PC-3 (cell line): ENCODE measurements at regions of chr14 and their contacts with region 1.

Region 1: GRCh38 chr14:63543000-63543825 is at the start of gene PPP2R5E:
- DNase-seq: peak; percentile 99
- ATAC-seq: peak; percentile 94
- H3K4me3 ChIP-seq: peak within 1 kb of the TSS; percentile 90
- H3K27ac ChIP-seq: peak within 1 kb of the TSS; percentile 61
- H3K4me1 ChIP-seq: peaks cover 19% of the 10 kb centered on the region
- H3K27me3 ChIP-seq: no peaks in the 10 kb centered on the region
- CTCF ChIP-seq: no peak
- total RNA-seq, gene PPP2R5E: 17.2 and 26.4 TPM in 2 replicates

Region 2: DNA sequence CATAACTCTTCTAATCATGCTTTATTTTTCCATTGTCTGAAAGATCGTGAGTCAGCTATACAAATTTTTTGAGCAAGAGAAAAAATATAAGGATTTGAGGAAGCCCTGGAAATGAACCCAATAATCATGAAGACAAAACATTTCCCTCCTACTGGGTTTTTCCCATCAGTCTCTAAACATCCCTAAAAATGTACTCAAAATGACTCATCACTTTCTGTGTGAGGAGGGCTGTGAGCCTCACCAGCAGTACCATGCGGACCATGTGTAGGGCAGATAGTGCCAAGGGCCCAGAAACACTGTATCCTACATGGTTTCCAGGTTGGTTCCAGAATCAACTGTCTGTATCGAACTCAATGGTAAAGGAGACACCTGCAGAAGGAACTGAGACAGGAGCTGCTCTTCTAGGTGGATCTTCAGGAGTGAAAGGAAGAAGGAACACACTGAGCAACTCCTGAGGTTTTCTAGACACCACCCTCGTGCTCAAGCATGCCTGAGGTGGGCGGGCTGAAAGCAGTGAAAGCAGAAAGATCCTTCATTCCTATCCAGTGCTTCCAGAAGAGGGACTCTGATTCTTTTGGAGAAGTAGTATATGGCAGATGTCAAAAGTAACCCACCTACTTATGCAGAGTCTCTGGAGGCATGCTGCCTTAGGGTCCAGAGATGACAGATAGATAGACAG is 387.6 kb before region 1 on chr14:
- CTCF ChIA-PET with region 1: no interaction called
- POLR2A ChIA-PET with region 1: no interaction called
- intact Hi-C with region 1: no loop called
- DNase-seq: no peak
- ATAC-seq: no peak
- H3K4me3 ChIP-seq: no peak overlapping the region
- H3K27ac ChIP-seq: no peak overlapping the region
- H3K4me1 ChIP-seq: no peaks in the 10 kb centered on the region
- H3K27me3 ChIP-seq: 0 out of 2 replicates have a peak, but pooled peaks cover 5% of the 10 kb centered on the region
- CTCF ChIP-seq: no peak

Region 3: GRCh38 chr14:63388763-63389431 is 154.3 kb before region 1 on chr14:
- CTCF ChIA-PET with region 1: interaction called, 21 read pairs
- POLR2A ChIA-PET with region 1: interaction called, 3 read pairs
- intact Hi-C with region 1: loop called (anchors 1 kb)
- DNase-seq: peak; percentile 78
- ATAC-seq: peak; percentile 96
- H3K4me3 ChIP-seq: no peak overlapping the region
- H3K27ac ChIP-seq: no peak overlapping the region
- H3K4me1 ChIP-seq: no peaks in the 10 kb centered on the region
- H3K27me3 ChIP-seq: no peaks in the 10 kb centered on the region
- CTCF ChIP-seq: peak; percentile 98

Region 4: GRCh38 chr14:63437953-63438757 is 105.1 kb before region 1 on chr14:
- CTCF ChIA-PET with region 1: interaction called, 7 read pairs
- POLR2A ChIA-PET with region 1: no interaction called
- intact Hi-C with region 1: loop called (anchors 1 kb)
- DNase-seq: peak; percentile 98
- ATAC-seq: peak; percentile 96
- H3K4me3 ChIP-seq: peak overlapping the region; percentile 56
- H3K27ac ChIP-seq: peak overlapping the region; percentile 80
- H3K4me1 ChIP-seq: peaks cover 40% of the 10 kb centered on the region
- H3K27me3 ChIP-seq: no peaks in the 10 kb centered on the region
- CTCF ChIP-seq: peak; percentile 56

Region 5: GRCh38 chr14:63470962-63471793 is 72.0 kb before region 1 on chr14:
- CTCF ChIA-PET with region 1: no interaction called
- POLR2A ChIA-PET with region 1: interaction called, 3 read pairs
- intact Hi-C with region 1: loop called (anchors 5 kb)
- DNase-seq: peak; percentile 96
- ATAC-seq: peak; percentile 87
- H3K4me3 ChIP-seq: peak overlapping the region; percentile 25; the same call in 1 of the 2 replicates
- H3K27ac ChIP-seq: peak overlapping the region; percentile 89
- H3K4me1 ChIP-seq: peaks cover 55% of the 10 kb centered on the region
- H3K27me3 ChIP-seq: no peaks in the 10 kb centered on the region
- CTCF ChIP-seq: no peak

Region 6: GRCh38 chr14:63632932-63633514 is 89.8 kb after region 1 on chr14:
- CTCF ChIA-PET with region 1: interaction called, 4 read pairs
- POLR2A ChIA-PET with region 1: no interaction called
- intact Hi-C with region 1: loop called (anchors 2 kb)
- DNase-seq: peak; percentile 71
- ATAC-seq: peak; percentile 88
- H3K4me3 ChIP-seq: no peak overlapping the region
- H3K27ac ChIP-seq: no peak overlapping the region
- H3K4me1 ChIP-seq: 0 out of 2 replicates have a peak, but pooled peaks cover 4% of the 10 kb centered on the region
- H3K27me3 ChIP-seq: no peaks in the 10 kb centered on the region
- CTCF ChIP-seq: peak; percentile 82

Region 7: GRCh38 chr14:63752513-63753169 is 209.4 kb after region 1 on chr14:
- CTCF ChIA-PET with region 1: no interaction called
- POLR2A ChIA-PET with region 1: no interaction called
- intact Hi-C with region 1: loop called (anchors 1 kb)
- DNase-seq: peak; percentile 96
- ATAC-seq: peak; percentile 96
- H3K4me3 ChIP-seq: peak overlapping the region; percentile 53
- H3K27ac ChIP-seq: peak overlapping the region; percentile 93
- H3K4me1 ChIP-seq: peaks cover 10% of the 10 kb centered on the region
- H3K27me3 ChIP-seq: no peaks in the 10 kb centered on the region
- CTCF ChIP-seq: no peak